ENCODE measurements at regions of chr16 and their contacts with region 1.

Region 1: GRCh38 chr16:3134564-3135417 is at the start of gene ZNF213:
- H3K4me3 Mint-ChIP-seq: peak within 1 kb of the TSS; percentile 92
- H3K27ac Mint-ChIP-seq: peak within 1 kb of the TSS; percentile 89
- H3K4me1 Mint-ChIP-seq: peaks cover 36% of the 10 kb centered on the region
- H3K27me3 Mint-ChIP-seq: no peaks in the 10 kb centered on the region

Region 2: DNA sequence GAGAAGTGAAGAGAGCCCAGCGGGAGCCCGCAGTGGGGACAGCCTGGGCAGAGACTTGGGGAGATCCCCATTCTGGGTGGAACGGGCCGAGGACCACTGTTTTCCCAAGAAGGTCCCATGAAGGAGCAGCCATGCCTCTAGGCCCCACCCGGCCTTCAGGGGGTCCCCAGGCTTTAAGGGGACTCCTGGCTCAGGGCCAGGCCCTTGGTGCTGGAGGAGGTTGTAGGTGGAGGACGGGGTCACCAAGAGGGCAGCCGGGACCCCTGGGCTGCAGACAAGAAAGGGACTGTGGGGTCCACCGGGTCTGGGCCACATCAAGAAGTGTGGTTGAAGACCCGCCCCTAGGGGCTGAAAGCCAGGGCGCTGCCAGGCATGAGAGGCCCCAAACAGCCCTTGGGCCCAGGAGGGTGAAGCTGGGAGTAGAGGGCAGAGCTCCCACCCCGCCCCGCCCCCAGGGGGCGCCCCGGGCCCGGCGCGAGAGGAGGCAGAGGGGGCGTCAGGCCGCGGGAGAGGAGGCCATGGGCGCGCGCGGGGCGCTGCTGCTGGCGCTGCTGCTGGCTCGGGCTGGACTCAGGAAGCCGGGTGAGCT is 317.9 kb before region 1 on chr16 and contains the start of gene PRSS21:
- intact Hi-C with region 1: no loop called
- H3K4me3 Mint-ChIP-seq: peak within 1 kb of the TSS; percentile 63
- H3K27ac Mint-ChIP-seq: peak within 1 kb of the TSS; percentile 76
- H3K4me1 Mint-ChIP-seq: peaks cover 40% of the 10 kb centered on the region
- H3K27me3 Mint-ChIP-seq: peaks cover 7% of the 10 kb centered on the region

Region 3: GRCh38 chr16:3123986-3124886 is 10.6 kb before region 1 on chr16:
- intact Hi-C with region 1: loop called (anchors 1 kb)
- H3K4me3 Mint-ChIP-seq: peak overlapping the region; percentile 99
- H3K27ac Mint-ChIP-seq: peak overlapping the region; percentile 97
- H3K4me1 Mint-ChIP-seq: peaks cover 32% of the 10 kb centered on the region
- H3K27me3 Mint-ChIP-seq: peaks cover 6% of the 10 kb centered on the region

Region 4: DNA sequence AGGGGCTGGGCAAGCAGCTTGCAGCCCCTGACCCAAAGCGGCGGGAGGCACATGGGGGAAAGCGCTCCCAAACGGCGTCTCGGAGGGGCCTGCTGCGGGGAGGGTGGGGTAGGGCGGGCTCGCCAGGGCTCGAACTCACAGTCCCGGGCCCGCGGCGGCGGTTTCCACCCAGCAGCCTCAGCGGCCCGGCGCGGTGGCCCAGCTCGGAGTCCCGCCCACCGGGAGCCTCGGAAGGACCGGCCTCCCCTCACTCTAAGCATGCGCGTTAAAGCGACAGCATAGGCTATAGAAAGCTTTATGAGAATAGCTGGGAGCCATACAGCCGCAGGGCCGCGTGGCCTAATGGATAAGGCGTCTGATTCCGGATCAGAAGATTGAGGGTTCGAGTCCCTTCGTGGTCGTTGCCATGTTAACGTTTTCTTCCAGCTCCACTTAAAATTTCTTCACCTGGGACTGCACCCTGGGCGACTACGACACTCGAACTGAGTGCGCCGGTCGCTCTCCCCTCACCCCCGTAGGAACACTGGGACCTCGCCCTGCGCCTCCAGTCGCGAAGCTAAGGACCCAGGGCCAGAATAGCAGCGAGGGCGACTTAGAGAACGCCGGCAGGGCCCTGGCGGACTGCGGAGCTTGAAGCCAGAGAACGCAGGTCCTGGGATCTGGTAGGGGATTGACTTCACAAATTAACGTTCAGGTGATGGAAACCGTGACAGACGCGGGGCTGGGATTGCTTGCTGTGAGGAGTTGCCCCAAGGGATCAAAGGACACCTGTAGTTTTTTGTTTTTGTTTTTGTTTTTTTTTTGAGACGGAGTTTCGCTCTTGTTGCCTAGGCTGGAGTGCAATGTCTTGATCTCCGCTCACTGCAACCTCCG is 15.8 kb after region 1 on chr16:
- intact Hi-C with region 1: loop called (anchors 2 kb)
- H3K4me3 Mint-ChIP-seq: peak overlapping the region; percentile 92
- H3K27ac Mint-ChIP-seq: peak overlapping the region; percentile 87
- H3K4me1 Mint-ChIP-seq: peaks cover 35% of the 10 kb centered on the region
- H3K27me3 Mint-ChIP-seq: peaks cover 37% of the 10 kb centered on the region

Region 5: DNA sequence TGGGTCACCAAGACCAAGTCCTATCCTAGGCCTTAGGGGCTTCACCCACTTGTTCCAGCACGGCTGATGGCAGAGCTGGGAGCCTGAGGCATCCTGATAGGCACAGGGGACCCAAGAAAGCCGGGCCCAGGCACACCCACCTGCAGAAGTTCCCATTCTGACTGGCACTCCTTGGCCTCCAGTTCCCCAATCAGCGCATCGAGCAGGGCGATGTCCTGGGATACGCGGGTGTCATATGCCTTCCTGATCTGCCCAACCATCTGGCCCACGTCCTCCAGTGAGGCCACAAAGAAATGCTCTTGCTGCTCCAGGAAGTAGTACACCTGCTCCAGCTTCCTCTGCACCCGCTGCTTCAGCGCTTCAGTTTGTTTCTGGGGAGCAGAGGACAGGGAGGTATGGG is 112.1 kb after region 1 on chr16:
- intact Hi-C with region 1: no loop called
- H3K4me3 Mint-ChIP-seq: no peak overlapping the region
- H3K27ac Mint-ChIP-seq: no peak overlapping the region
- H3K4me1 Mint-ChIP-seq: peaks cover 41% of the 10 kb centered on the region
- H3K27me3 Mint-ChIP-seq: no peaks in the 10 kb centered on the region

Measured in dendritic cell treated with granulocyte-macrophage colony-stimulating factor and Interleukin-4, amounts not matched to agents 40 ng/mL and 50 ng/mL, for 4 days (primary cell).